ENCODE measurements at regions of chr9 and their contacts with region 1.

Region 1: GRCh38 chr9:134024828-134025605 is at the start of gene BRD3OS:
- DNase-seq: peak; percentile 96
- ATAC-seq: peak; percentile 92
- H3K4me3 Mint-ChIP-seq: peak within 1 kb of the TSS; percentile 75
- H3K27ac Mint-ChIP-seq: peak within 1 kb of the TSS; percentile 68
- H3K4me1 Mint-ChIP-seq: peaks cover 7% of the 10 kb centered on the region
- H3K27me3 Mint-ChIP-seq: peaks cover 2% of the 10 kb centered on the region
- total RNA-seq, gene BRD3OS: 12.5 to 14.5 TPM

Region 2: DNA sequence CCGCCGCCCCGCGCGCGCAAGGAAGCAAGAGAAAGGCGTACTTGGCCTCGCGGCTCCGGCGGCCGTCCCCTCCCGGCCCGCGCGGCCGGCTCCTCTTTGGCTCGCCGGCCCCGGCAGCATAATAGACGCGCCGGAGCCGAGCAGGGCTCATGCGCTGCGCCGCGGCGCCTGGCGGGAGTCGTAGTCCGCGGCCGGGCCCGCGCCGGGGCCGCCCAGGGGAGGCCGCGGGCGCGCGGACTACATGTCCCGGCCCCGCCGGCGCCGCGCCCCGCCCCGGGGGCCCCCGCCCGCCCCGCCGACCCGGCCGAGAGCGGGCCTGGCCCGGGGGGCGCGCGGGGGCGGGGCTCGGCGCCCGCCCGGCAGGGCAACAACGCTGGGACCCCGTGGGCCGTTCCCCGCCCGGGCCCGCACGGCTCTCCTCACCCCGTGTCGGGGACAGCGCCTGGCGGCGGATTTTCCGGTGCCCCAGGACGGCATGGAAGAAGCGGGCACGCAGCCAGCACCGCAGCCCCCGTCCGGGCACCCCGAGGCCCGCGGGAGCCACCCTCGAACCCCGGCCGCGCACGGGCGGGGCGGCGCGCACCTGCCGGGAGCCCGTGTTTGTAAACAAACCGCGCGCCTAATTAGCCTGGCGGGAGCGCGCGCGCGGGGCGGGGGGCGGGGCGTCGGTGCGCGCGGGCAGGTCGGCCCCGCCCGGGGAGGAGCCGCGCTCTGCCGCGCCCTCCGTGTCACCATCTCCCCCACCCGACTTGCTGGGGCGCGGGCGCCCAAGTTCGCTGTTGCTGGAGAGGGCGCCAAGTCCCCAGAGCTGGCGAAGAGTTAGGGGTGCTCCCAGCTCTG is 43.1 kb after region 1 on chr9 and contains the start of gene BRD3:
- CTCF ChIA-PET with region 1: interaction called, 11 read pairs
- DNase-seq: peak; percentile 86
- ATAC-seq: peak; percentile 89
- H3K4me3 Mint-ChIP-seq: peak within 1 kb of the TSS; percentile 77
- H3K27ac Mint-ChIP-seq: peak within 1 kb of the TSS; percentile 92
- H3K4me1 Mint-ChIP-seq: peaks cover 23% of the 10 kb centered on the region
- H3K27me3 Mint-ChIP-seq: peaks cover 35% of the 10 kb centered on the region
- total RNA-seq, gene BRD3: 33.3 to 43.5 TPM